Activated B cell treated with CpG ODN at 0.5 μM for 24 hours (primary cell): ENCODE measurements at regions of chr19 and their contacts with region 1.

Region 1: DNA sequence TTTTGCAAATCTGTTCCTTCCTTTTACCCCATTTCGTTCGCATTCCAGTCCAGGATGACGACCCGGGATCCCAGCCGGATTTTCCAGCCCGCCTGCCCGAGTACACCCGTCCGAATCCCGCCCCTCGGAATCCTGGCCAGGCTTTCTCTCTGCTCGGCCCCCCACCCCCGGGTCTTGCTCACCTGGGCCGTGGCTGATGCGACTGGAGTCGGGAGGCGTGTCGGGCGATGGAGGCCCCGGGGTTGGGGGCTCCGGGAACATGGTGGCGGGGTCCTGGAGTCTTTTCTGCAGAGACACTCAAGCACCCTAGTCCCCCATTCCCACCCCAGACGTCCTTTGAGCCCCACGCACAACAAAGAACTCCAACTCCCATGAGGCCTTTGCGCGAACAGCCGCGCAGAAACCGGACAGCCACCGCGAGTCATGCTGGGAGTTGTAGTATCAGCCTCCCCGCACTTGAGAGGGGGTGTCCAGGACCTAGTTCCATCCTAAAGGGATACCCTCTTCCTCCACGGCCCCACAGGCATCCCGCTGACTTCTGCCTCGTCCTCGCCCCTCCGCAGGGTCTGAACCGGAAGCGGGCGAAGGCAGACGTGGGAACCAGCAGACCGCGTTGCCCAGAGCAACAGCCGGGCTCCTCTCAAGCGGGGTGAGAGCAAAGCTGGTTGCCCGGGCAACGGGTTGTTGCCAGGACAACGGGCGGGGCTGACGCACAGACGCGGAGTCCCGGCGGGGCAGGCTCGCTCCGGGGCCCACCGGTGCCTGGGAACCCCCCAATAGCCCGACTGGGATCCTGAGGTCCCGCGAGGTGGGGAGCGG is 1.1 kb downstream of the SYT5 start:
- DNase-seq: peak; percentile 94
- ATAC-seq: peak; percentile 84
- H3K4me3 Mint-ChIP-seq: peak overlapping the region; percentile 79
- H3K27ac Mint-ChIP-seq: peak overlapping the region; percentile 75
- H3K4me1 Mint-ChIP-seq: peaks cover 22% of the 10 kb centered on the region
- H3K27me3 Mint-ChIP-seq: peaks cover 69% of the 10 kb centered on the region
- CTCF ChIP-seq: no peak

Region 2: DNA sequence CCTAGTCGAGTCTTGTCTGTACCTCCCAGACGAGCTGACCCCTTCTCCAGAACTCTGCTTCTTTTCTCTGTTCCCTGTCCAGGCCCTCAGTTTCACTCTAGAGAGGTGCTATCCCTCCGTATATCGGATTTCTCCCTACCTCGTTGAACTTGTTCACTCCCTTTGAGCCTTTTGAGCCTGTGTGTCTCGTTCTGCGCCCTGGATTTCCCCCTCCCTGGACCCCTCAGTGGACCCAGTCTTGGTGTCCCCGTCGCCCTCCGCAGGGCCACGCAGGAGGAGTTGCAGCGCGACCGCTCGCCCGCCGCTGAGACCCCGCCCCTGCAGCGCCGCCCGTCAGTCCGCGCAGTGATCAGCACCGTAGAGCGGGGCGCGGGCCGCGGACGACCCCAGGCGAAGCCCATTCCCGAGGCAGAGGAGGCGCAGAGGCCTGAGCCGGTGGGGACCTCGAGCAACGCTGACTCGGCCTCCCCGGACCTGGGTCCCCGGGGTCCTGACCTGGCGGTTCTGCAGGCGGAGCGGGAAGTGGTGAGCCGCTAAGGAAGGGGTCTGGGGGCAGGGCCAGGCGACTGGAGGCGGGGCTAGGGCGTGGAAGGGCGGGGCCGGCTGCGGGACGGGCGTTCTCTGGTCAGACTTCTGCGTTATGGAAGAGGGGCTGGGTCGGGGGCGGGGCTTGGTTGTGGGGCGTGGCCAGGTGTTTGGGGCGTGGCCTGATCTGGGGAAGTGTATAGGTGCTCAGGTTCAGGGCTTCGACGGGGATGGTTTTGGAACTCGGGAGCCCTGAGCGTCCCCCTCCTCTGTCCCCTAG is 97.8 kb before region 1 on chr19:
- CTCF ChIA-PET with region 1: no interaction called
- POLR2A ChIA-PET with region 1: no interaction called
- intact Hi-C with region 1: loop called (anchors 5 kb)
- DNase-seq: peak; percentile 80
- ATAC-seq: peak; percentile 87
- H3K4me3 Mint-ChIP-seq: peak overlapping the region; percentile 76
- H3K27ac Mint-ChIP-seq: peak overlapping the region; percentile 18
- H3K4me1 Mint-ChIP-seq: peaks cover 31% of the 10 kb centered on the region
- H3K27me3 Mint-ChIP-seq: peaks cover 54% of the 10 kb centered on the region
- CTCF ChIP-seq: no peak

Region 3: DNA sequence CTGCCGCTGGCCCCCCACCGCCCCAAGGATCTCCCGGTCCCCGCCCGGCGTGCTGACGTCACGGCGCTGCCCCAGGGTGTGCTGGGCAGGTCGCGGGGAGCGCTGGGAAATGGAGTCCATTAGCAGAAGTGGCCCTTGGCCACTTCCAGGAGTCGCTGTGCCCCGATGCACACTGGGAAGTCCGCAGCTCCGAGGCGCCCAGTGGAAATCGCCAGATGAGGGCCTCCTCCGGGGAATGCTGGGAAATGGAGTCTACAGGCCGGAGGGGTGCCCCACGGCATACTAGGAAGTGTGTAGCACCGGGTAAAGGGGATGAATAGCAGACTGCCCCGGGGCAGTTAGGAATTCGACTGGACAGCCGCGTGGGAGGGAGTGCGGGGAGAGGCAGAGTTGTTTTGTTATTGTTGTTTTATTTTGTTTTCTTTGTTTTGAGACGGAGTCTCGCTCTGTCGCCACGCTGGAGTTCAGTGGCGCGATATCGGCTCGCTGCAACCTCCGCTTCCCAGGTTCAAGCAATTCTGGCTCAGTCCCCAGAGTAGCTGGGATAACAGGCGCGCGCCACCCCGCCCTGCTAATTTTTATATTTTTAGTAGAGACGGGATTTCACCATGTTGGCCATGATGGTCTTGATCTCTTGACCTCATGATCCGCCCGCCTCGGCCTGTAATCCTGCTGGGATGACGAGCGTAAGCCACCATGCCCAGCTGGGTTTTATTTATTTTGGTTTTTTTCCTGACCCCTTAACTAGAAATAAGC is 61.2 kb before region 1 on chr19 and contains the start of gene PPP1R12C:
- CTCF ChIA-PET with region 1: no interaction called
- POLR2A ChIA-PET with region 1: no interaction called
- intact Hi-C with region 1: loop called (anchors 1 kb)
- DNase-seq: peak; percentile 96
- ATAC-seq: peak; percentile 93
- H3K4me3 Mint-ChIP-seq: peak within 1 kb of the TSS; percentile 97
- H3K27ac Mint-ChIP-seq: peak within 1 kb of the TSS; percentile 87
- H3K4me1 Mint-ChIP-seq: peaks cover 55% of the 10 kb centered on the region
- H3K27me3 Mint-ChIP-seq: no peaks in the 10 kb centered on the region
- CTCF ChIP-seq: no peak
- total RNA-seq, gene PPP1R12C: 115 and 139 TPM in 2 replicates

Region 4: GRCh38 chr19:55160128-55160985 is 18.6 kb before region 1 on chr19:
- CTCF ChIA-PET with region 1: no interaction called
- POLR2A ChIA-PET with region 1: no interaction called
- intact Hi-C with region 1: loop called (anchors 2 kb)
- DNase-seq: peak; percentile 70
- ATAC-seq: peak; percentile 97
- H3K4me3 Mint-ChIP-seq: no peak overlapping the region
- H3K27ac Mint-ChIP-seq: no peak overlapping the region
- H3K4me1 Mint-ChIP-seq: peaks cover 6% of the 10 kb centered on the region
- H3K27me3 Mint-ChIP-seq: peaks cover 49% of the 10 kb centered on the region
- CTCF ChIP-seq: peak; percentile 35

Region 5: DNA sequence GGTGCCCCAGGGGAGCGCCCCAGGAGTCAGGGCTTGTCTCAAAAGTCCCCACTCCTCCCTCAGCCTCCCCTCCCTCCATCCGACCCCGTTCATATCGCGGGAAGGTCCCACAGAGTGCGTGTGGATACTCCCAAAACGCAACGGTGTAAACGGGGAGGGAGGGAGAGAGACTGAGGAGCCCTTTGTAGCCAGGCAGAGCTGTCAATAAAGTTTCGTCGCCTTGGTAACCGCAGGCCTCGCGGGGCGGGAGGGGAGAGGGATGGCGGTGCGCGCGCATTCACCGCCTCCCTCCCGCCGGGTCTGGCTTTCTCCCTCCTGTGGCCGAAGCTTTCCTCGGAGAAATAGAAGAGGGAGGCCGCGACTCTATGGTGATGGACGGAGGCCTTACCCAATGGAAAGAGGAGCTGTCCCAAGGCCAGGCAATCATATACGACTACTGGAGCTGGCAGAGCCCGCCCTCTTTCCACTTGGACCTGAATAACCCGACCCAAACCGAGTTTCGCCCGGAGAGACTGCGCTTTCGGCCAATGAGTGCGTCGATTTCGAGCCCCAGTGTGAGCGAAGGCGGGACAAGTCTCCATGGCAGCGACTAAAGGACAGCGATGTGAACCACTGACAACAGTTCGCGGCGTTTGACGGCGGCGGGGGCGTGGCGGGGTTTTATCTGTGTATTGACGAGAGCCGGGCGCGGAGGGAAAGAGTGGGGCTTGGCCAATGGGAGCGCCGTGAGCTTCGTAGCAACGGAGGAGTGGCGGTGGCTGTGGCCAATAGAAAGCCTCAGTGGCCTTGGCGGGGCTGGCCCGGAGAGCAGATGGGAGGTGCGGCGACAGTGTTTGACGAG is 160.3 kb after region 1 on chr19 and contains the start of gene KMT5C:
- CTCF ChIA-PET with region 1: no interaction called
- POLR2A ChIA-PET with region 1: interaction called, 4 read pairs
- intact Hi-C with region 1: loop called (anchors 1 kb)
- DNase-seq: peak; percentile 99
- ATAC-seq: peak; percentile 81
- H3K4me3 Mint-ChIP-seq: peak within 1 kb of the TSS; percentile 95
- H3K27ac Mint-ChIP-seq: peak within 1 kb of the TSS; percentile 90
- H3K4me1 Mint-ChIP-seq: peaks cover 31% of the 10 kb centered on the region
- H3K27me3 Mint-ChIP-seq: peaks cover 7% of the 10 kb centered on the region
- CTCF ChIP-seq: no peak
- total RNA-seq, gene KMT5C: 7.2 and 8.1 TPM in 2 replicates

Region 6: GRCh38 chr19:55452749-55453346 is 273.9 kb after region 1 on chr19:
- CTCF ChIA-PET with region 1: no interaction called
- POLR2A ChIA-PET with region 1: interaction called, 12 read pairs
- intact Hi-C with region 1: no loop called
- DNase-seq: no peak
- ATAC-seq: no peak
- H3K4me3 Mint-ChIP-seq: no peak overlapping the region
- H3K27ac Mint-ChIP-seq: no peak overlapping the region
- H3K4me1 Mint-ChIP-seq: peaks cover 20% of the 10 kb centered on the region
- H3K27me3 Mint-ChIP-seq: peaks cover 11% of the 10 kb centered on the region
- CTCF ChIP-seq: no peak